Activated naive CD4-positive, alpha-beta T cell treated with anti-CD3 and anti-CD28 coated beads, Interleukin-2, amount 10 ng/mL, durations not matched to agents 7 days and 5 days (primary cell): ENCODE measurements at regions of chr19 and their contacts with region 1.

Region 1: DNA sequence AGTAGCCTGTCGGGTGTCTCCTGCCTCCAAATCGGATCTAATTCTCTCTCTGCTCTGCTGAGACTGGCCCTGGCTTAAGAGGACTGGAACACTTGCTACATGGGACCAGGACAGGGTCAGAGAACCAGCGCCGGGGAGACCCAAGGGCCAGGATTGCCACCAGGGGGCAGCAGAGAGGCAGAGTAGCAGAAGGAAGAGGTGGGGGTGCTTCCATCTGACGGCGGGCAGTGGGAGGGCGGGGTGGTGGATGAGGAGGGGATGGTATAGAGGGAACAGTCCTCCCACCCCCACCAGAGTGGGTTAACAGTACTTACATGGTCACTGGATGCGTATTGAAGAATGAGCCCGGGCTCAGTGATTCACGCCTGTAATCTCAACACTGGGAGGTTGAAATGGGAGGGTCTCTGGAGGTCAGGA is 11.9 kb downstream of the SELENOW start:
- DNase-seq: peak; percentile 89
- H3K4me3 Mint-ChIP-seq: no peak overlapping the region
- H3K27ac Mint-ChIP-seq: no peak overlapping the region
- H3K4me1 Mint-ChIP-seq: peaks cover 2% of the 10 kb centered on the region
- H3K27me3 Mint-ChIP-seq: no peaks in the 10 kb centered on the region

Region 2: DNA sequence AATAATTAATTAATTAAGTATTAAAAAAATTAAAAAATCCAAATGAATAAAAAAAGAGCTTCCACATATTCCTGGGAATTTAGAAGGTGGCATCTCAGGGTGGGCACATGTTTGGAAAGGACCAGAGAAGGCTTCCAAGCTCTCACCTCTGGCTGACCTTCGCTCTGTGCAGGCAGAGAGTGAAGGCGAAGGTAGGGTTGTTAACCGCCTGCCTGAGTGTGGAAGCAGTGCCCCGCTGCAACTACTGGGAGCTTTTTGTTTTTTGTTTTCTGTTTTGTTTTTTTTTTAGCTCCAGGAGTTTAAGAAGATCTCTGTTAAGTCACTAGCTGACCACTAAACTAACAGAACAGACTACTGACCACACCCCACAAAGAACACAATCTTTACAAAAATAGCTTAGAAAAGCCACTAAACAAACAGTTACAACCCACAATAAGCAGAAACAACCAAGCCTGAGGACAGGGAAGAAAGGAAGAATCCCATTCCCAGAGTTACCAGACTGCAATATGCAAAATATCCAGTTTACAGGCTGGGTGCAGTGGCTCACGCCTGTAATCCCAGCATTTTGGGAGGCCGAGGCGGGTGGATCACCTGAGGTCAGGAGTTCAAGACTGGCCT is 228.9 kb before region 1 on chr19:
- CTCF ChIA-PET with region 1: no interaction called
- DNase-seq: no peak
- H3K4me3 Mint-ChIP-seq: no peak overlapping the region
- H3K27ac Mint-ChIP-seq: no peak overlapping the region
- H3K4me1 Mint-ChIP-seq: peaks cover 6% of the 10 kb centered on the region
- H3K27me3 Mint-ChIP-seq: peaks cover 11% of the 10 kb centered on the region

Region 3: GRCh38 chr19:47765523-47766358 is 24.7 kb before region 1 on chr19:
- CTCF ChIA-PET with region 1: interaction called, 10 read pairs
- DNase-seq: peak; percentile 59
- H3K4me3 Mint-ChIP-seq: no peak overlapping the region
- H3K27ac Mint-ChIP-seq: no peak overlapping the region
- H3K4me1 Mint-ChIP-seq: peaks cover 5% of the 10 kb centered on the region
- H3K27me3 Mint-ChIP-seq: peaks cover 19% of the 10 kb centered on the region

Region 4: GRCh38 chr19:47805313-47805712 is 14.9 kb after region 1 on chr19:
- CTCF ChIA-PET with region 1: interaction called, 10 read pairs
- DNase-seq: no peak
- H3K4me3 Mint-ChIP-seq: no peak overlapping the region
- H3K27ac Mint-ChIP-seq: no peak overlapping the region
- H3K4me1 Mint-ChIP-seq: no peaks in the 10 kb centered on the region
- H3K27me3 Mint-ChIP-seq: no peaks in the 10 kb centered on the region

Region 5: DNA sequence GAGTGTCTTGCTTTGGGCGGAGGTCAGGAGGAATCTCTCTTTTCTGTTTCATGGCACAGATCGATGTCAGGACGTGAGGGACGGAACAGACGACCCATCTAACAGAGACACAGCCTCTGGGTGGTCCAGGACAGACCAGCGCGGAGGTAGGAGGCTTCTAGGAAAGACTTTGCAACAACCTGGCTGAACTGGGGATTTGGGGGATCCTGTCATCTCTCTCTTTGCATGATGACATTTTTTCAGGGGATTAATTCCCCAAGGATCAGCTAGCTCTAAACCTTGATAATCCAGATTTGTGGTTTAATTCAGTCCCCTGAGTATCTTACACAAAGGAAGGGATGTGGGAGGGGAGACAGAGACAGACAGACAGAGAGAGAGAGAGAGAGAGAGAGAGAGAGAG is 239.0 kb after region 1 on chr19:
- CTCF ChIA-PET with region 1: no interaction called
- DNase-seq: no peak
- H3K4me3 Mint-ChIP-seq: no peak overlapping the region
- H3K27ac Mint-ChIP-seq: no peak overlapping the region
- H3K4me1 Mint-ChIP-seq: peaks cover 8% of the 10 kb centered on the region
- H3K27me3 Mint-ChIP-seq: peaks cover 34% of the 10 kb centered on the region